Aorta (tissue), 5 donors: ENCODE measurements at regions of chr9 and their contacts with region 1.

Region 1: GRCh38 chr9:114155263-114155972 is at the start of gene COL27A1:
- DNase-seq: peak; percentile 86 to 96
- ATAC-seq: peak; percentile 90
- H3K4me3 ChIP-seq: peak within 1 kb of the TSS; percentile 84
- H3K27ac ChIP-seq: peak within 1 kb of the TSS in 1 of 2 donors; percentile 64
- H3K4me1 ChIP-seq: no peaks in the 10 kb centered on the region
- H3K27me3 ChIP-seq: no peaks in the 10 kb centered on the region
- total RNA-seq, gene COL27A1: 36.9 to 54.3 TPM

Region 2: DNA sequence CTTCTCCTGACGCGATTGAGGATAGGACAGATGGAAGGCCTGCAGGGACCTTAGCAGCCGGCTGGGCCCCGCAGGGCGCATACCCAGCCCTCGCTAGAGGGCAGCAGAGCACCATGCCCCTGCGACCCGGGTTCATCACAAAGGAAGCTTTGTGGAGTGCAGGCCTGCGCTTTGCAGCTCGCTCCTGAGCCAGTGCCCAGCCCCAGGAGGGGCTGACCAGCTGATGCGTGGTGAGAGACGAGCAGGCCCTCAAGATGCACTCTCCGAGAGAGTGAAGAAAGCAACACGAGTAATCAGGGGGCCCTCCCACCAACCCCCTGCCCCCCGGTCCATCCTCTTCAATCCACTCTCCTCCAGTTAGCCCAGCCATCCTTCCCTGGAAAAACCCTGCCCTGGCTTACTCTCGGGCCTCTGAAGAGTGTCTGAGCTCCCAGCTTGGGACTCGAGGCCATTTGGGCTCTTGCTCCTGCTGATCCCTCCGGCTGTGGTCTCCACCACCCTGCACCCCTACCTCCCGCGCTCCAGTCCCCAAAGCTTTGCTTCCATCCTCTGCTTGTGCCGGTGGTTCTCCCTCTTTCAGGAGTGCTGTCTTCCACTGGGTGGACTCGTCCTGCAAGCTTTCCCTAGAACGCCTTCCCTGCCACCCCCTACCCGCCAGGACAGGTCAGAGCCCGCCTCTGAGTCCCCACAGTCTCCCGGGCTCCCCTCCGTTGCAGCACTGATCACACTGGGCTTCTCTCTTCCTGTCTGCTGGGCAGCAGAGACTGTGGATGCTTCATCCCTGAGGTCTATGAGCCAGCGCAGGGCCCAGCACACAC is 47.2 kb before region 1 on chr9:
- intact Hi-C with region 1: loop called (anchors 2 to 5 kb)
- DNase-seq: peak; percentile 80 to 93
- ATAC-seq: peak; percentile 82
- H3K4me3 ChIP-seq: no peak overlapping the region
- H3K27ac ChIP-seq: no peak overlapping the region
- H3K4me1 ChIP-seq: no peaks in the 10 kb centered on the region
- H3K27me3 ChIP-seq: no peaks in the 10 kb centered on the region

Region 3: GRCh38 chr9:114121227-114122135 is 33.9 kb before region 1 on chr9:
- intact Hi-C with region 1: no loop called
- DNase-seq: no peak
- ATAC-seq: no peak
- H3K4me3 ChIP-seq: no peak overlapping the region
- H3K27ac ChIP-seq: no peak overlapping the region
- H3K4me1 ChIP-seq: no peaks in the 10 kb centered on the region
- H3K27me3 ChIP-seq: no peaks in the 10 kb centered on the region

Region 4: DNA sequence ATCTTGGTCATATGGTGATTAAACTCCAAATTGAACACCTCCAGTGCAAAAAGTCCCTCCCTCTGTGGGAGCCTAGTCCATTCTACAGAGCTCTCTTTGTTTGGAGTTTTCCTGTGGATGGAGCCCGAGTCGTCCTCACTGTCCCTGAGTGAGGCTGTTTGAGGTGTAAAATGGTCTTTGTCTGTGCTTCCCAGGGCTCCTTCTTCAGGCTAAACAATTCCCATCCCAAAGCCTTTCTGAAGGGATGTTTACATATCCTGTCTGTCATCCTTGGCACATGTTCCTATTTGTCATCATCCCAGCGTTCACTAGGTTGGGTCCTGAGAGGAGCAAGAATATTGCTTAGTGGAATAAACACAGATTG is 68.8 kb after region 1 on chr9:
- intact Hi-C with region 1: no loop called
- DNase-seq: no peak
- ATAC-seq: no peak
- H3K4me3 ChIP-seq: no peak overlapping the region
- H3K27ac ChIP-seq: no peak overlapping the region
- H3K4me1 ChIP-seq: no peaks in the 10 kb centered on the region
- H3K27me3 ChIP-seq: no peaks in the 10 kb centered on the region

Region 5: DNA sequence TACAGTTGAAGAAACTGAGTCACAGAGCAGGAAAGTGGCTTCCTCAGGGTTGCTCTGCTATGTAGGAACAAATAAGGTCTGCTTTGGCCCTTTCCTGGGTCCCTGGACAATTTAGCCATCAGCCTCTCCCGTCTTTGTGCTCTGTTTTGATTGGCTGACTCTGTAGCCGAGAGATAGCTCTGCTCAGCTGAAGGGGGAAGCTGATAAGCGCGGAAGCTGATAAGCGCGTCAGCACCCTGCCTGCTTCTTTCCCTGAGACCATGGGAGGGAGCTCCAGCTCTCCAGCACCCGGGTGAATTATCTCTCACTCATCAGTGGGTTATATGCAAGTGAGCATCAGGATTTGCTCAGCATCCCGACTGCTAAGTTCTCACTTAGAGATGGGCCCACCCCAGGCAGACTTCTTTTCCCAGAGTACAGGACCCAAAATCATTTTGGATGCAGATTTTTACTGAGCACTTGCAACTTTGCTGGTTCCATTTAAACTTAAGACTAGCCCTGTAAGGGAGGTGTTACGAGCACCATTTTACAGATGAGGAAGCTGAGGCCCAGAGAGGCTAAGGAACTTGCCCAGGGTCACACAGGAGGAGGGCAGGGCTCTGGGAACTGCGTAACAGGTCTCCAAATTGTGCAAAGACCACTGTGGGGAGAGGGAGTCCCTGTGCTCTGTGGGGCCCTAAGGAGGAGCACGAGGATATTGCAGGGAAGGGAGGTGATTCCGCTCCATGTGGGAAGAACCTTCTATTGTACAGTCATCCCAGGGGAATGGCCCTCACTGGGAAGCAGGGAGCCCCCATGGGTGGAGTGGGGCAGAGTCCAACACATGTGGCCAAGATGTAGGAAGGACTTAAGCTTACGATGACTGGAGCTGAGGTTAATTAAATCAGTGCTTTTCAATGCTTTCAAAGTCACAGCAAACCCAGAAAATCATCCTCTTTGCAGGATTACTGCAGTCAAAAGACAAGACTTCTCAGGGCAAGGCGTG is 83.8 kb after region 1 on chr9:
- intact Hi-C with region 1: loop called (anchors 2 to 5 kb)
- DNase-seq: no peak
- ATAC-seq: peak; percentile 68
- H3K4me3 ChIP-seq: no peak overlapping the region
- H3K27ac ChIP-seq: peak overlapping the region in 1 of 2 donors; percentile 68
- H3K4me1 ChIP-seq: peaks cover 3 to 5% of the 10 kb centered on the region in 2 donors
- H3K27me3 ChIP-seq: no peaks in the 10 kb centered on the region

Region 6: GRCh38 chr9:114271641-114272081 is 116.2 kb after region 1 on chr9:
- intact Hi-C with region 1: loop called (anchors 1 to 5 kb)
- DNase-seq: peak; percentile 62 to 84
- ATAC-seq: peak; percentile 65
- H3K4me3 ChIP-seq: no peak overlapping the region
- H3K27ac ChIP-seq: no peak overlapping the region
- H3K4me1 ChIP-seq: no peaks in the 10 kb centered on the region
- H3K27me3 ChIP-seq: no peaks in the 10 kb centered on the region

Region 7: DNA sequence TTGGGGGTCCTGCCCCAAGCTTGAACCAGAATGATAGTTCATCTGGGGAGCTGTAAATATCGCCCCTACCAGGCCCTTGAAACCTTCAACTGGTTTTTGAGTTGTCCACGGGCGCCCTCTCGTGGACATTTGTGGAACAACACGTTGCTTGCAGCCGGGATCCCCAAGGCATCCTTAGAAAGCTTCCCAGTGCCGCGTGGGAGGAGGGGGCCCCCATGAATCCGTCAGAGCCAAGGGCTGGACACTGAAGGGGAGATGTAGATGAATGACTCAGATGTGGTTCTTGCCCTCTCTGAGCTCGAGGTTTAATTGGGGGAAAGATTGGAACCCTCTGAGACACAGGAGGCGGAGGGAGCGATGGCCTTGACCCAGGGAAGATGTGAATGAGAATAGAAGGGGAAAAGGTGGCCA is 135.7 kb after region 1 on chr9:
- intact Hi-C with region 1: loop called (anchors 2 to 5 kb)
- DNase-seq: peak; percentile 74 to 92
- ATAC-seq: peak; percentile 69
- H3K4me3 ChIP-seq: no peak overlapping the region
- H3K27ac ChIP-seq: no peak overlapping the region
- H3K4me1 ChIP-seq: no peaks in the 10 kb centered on the region
- H3K27me3 ChIP-seq: no peaks in the 10 kb centered on the region